ENCODE measurements at regions of chrX and their contacts with region 1.

Region 1: GRCh38 chrX:39907964-39908616 is 189.7 kb downstream of the BCOR start:
- DNase-seq: no peak
- H3K4me3 ChIP-seq: peak overlapping the region in 1 of 4 donors; percentile 27
- H3K27ac ChIP-seq: peak overlapping the region; percentile 63 to 72 (median 68)
- H3K4me1 ChIP-seq: peaks cover 8 to 51% (median 35%) of the 10 kb centered on the region in 4 donors
- H3K27me3 ChIP-seq: no peaks in the 10 kb centered on the region
- CTCF ChIP-seq: no peak
- EP300 ChIP-seq: no peak
- POLR2A ChIP-seq: no peak

Region 2: GRCh38 chrX:40085102-40085551 is 177.0 kb after region 1 on chrX:
- intact Hi-C with region 1: loop called (anchors 5 kb)
- DNase-seq: no peak
- H3K4me3 ChIP-seq: no peak overlapping the region
- H3K27ac ChIP-seq: no peak overlapping the region
- H3K4me1 ChIP-seq: peaks cover 38 to 93% (median 90%) of the 10 kb centered on the region in 4 donors
- H3K27me3 ChIP-seq: peaks cover 0 to 13% (median 0%) of the 10 kb centered on the region in 4 donors
- CTCF ChIP-seq: no peak
- EP300 ChIP-seq: no peak
- POLR2A ChIP-seq: no peak